Right ventricle myocardium inferior (tissue), 1 donor: ENCODE measurements at regions of chr2 and their contacts with region 1.

Region 1: GRCh38 chr2:9003616-9004337 is at the start of gene MBOAT2:
- DNase-seq: peak; percentile 93
- ATAC-seq: peak; percentile 97
- total RNA-seq, gene MBOAT2: 13.9 TPM

Region 2: DNA sequence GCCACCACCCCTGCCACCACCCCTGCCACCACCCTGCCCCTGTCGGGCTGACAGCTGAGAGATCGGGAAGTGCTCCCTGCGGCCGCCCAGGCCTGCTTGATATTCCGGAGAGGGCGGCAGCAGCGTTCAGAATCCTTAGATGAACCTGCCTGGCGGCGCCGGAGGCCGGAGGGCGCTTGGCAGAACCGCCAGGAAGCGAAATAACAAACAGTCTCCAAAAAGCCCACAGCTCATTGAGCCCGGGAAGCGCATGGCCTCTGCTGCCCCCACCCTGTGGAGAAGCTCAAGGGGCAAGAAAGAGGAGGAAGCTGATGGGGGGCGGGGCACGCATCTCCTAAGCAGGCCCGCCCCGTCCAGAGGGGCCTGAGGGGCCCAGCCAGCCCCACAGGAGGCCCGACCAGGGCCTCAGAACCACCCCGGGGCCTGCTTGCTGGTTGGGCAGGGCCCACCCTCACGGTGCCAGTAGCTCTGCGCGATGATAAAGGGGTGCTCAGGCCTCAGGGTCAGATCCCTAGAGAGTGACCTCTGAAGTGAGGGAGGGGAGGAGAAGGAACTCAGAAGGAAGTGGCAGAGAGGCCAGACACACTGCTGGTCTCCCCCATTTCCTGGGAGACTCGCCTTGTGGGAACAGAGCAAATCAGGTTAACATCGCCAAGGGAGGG is 92.0 kb after region 1 on chr2:
- intact Hi-C with region 1: loop called (anchors 10 kb)
- DNase-seq: peak; percentile 81
- ATAC-seq: peak; percentile 76

Region 3: DNA sequence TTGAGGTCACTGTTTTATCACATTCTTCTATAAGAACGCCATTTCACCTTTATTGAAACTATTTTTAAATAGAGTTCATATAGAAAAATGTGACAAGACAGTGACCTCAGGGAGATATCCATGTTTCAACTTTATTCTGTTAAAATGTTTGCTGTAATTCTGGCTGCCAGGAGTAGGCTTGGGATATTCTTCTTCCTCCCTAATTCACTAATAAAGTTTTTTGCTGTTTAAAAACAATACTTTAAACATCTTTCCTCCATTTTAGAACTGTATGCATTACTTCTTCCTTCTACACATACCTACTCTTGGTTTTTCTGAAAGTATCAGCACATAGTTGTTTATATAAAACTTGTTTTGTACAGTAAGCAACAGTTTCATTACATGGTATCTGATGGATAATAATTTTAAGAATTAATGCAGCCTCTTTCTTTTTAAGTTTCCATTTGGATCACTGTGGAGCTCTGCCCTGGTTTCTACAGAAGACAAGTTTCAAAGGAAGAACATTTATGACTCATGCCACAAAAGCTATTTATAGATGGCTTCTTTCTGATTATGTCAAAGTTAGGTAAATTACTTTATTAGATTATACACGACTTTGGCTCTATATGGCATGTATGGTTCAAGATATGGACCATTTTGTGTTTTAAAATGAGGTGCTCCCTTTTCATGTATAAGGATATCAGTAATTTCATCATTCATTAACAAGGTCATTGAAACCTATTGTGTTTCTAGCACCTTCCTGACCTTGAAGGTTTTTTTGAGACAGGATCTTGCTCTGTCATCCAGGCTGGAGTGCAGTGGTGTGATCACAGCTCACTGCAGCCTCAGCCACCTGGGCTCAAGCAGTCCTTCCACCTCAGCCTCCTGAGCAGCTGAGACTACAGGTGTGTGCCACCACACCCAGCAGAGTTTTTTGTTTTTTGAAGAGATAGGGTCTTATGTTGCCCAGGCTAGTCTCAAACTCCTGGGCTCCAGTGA is 426.8 kb after region 1 on chr2:
- intact Hi-C with region 1: no loop called
- DNase-seq: no peak
- ATAC-seq: no peak